ENCODE measurements at regions of chr11 and their contacts with region 1.

Region 1: DNA sequence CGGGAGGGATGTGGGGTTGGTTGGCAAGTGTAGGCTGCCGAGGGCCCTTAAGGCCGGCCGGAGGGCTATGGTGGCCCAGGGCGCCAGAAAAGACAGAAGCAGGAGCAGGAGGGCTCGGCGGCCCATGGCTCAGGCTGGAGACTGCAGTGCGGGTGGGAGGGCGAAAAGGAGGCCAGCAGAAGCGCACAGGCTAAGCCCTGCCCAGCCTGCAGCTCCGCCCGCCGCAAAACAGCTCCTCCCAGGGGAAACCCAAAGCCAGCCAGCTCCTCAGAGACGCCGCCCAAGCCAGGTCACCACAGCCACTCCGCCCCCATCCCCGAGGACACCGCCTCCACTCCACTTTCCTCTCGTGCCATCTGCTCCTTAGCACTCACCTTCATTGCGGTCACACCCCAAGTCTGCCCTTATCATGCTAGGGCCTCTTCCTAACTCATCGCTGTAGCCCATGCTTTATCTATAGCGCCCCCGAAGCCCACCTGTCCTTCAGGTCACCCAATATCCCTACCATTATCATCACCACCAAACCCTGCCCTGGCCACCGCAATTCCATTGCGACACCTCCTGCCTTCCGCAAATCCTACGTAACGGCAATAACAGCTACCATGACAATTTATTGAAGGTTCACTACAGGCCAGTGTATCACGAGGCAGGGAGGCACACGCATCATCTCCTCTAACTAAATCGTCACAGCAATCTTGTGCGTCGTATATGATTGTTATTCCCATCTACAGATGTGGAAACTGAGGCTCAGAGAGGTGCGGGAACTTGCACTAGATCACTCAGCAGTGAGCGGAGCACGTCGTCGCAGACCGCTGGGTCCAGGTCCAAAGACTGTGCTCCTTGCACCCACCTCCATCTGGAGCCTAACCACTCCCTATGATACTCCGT is at the start of gene PRCP:
- DNase-seq: peak; percentile 98
- total RNA-seq, gene PRCP: 75.9 to 107 TPM

Region 2: DNA sequence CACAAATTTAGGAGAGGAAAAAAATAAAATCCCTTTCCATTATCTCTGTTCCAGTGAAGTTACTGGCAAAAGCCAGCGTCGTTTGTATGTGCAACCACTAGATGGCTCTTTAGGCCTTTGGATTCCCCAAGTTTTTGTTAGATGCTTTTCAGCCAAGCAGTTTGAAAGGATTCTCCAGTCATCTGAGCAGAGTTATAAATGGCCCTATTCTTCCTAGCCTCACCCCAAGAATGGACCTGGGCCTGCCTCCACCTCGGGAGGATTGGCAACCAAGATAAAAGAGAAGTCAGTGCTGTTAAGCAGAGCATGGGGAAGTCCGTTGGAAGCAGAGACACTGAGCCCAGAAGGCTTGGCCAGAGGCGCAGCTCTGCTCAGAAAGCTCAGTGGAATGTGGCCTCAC is 182.2 kb before region 1 on chr11:
- intact Hi-C with region 1: loop called in 1 of 2 experiments (anchors 5 kb)
- DNase-seq: no peak

Region 3: GRCh38 chr11:83087035-83087434 is 186.5 kb after region 1 on chr11:
- intact Hi-C with region 1: loop called in 1 of 2 experiments (anchors 10 kb)
- DNase-seq: no peak

Region 4: GRCh38 chr11:83193315-83194280 is 293.1 kb after region 1 on chr11 and contains the start of gene ANKRD42:
- intact Hi-C with region 1: loop called in 1 of 2 experiments (anchors 10 kb)
- DNase-seq: peak; percentile 97
- total RNA-seq, gene ANKRD42: 9.5 to 11.5 TPM

Region 5: GRCh38 chr11:83249972-83250593 is 349.6 kb after region 1 on chr11:
- intact Hi-C with region 1: loop called in 1 of 2 experiments (anchors 10 kb)
- DNase-seq: no peak

Measured in posterior vena cava (tissue), 2 donors.